GM10248 (cell line): ENCODE measurements at regions of chr19 and their contacts with region 1.

Region 1: GRCh38 chr19:17052439-17053210 is 22.6 kb downstream of the HAUS8 start:
- DNase-seq: no peak
- CTCF ChIP-seq: peak; percentile 42

Region 2: GRCh38 chr19:17041976-17042375 is 10.6 kb before region 1 on chr19:
- CTCF ChIA-PET with region 1: interaction called, 10 read pairs
- POLR2A ChIA-PET with region 1: no interaction called
- DNase-seq: no peak
- CTCF ChIP-seq: no peak